Dorsolateral prefrontal cortex (tissue), 120 donors: ENCODE measurements at regions of chr1 and their contacts with region 1.

Region 1: DNA sequence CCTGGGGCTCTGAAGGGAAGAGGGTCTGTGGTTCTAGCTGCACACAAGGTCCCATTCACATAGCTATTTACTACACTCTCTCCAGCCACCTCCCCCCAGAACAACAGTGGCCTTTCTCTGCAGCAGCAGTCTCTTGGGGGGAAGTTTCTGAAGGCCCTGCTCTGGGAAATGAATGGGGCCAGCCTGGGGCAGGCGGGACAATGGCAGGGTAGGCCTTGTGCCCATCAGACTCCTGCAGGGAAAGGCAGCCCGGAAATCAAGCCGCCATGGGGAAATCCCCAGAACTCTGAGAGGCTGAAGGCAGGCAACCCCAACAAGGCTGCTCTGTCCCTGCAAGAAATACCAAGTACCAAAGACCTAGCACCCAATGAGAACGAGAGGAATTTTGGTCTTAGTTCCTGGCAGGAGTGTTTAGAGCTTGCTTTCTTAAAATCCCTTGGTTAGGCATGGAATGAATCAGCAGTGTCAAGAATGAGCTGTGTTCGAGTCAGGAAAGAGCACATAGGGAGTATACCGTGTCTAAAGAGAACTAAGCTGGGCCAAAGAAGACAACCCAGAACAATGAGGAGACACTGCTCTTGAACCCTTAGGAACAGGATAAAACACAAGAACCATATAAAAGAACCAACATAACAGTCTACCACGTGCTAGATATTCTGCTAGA is 11.3 kb downstream of the ARHGEF11 start:
- DNase-seq: peak in 9 of 10 donors; percentile 32 to 72 (median 54)
- H3K4me3 ChIP-seq: peak overlapping the region in 2 of 59 donors; percentile 2 to 9
- H3K27ac ChIP-seq: peak overlapping the region in 31 of 59 donors; percentile 2 to 72 (median 41)
- H3K27me3 ChIP-seq: no peaks in the 10 kb centered on the region
- CTCF ChIP-seq: peak in 2 of 56 donors; percentile 11 to 12

Region 2: GRCh38 chr1:157045251-157046218 is 11.3 kb after region 1 on chr1 and contains the start of gene ARHGEF11:
- intact Hi-C with region 1: loop called in 1 of 2 experiments (anchors 1 kb)
- DNase-seq: peak; percentile 66 to 94 (median 88)
- H3K4me3 ChIP-seq: peak within 1 kb of the TSS; percentile 47 to 89 (median 73)
- H3K27ac ChIP-seq: peak within 1 kb of the TSS in 57 of 59 donors; percentile 45 to 95 (median 86)
- H3K27me3 ChIP-seq: no peaks in the 10 kb centered on the region
- CTCF ChIP-seq: peak in 13 of 56 donors; percentile 8 to 48 (median 16)
- total RNA-seq, gene ARHGEF11: 42.3 to 101 (median 74.9) TPM